Aorta (tissue), 5 donors: ENCODE measurements at regions of chr3 and their contacts with region 1.

Region 1: DNA sequence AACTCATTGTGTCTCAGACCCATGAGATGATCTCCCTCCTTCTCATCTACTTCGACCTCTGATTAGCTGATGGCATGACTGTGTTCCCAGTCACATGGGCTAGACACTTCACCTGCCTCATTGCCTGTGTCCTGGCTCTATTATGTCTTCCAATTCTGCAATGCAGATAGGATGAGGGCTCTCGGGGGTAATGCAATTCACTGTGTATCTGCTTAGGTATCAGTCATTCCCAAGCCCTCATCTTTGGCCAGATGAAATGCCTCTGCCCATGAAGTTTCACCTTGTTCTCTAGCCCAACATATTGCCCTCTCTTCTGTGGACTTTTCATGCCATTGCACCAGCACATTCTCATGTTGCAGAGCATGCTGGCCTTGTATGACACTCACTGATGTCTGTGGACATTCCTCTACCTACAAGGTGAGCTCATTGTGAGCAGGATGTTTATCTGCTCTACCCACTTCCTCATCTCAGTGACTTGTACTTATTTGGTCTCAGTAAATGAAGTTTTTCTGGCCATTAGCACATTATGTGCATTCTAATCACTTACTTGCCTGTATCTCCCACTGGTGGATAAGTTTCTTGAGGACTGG is 32.3 kb downstream of the MOBP start:
- DNase-seq: no peak
- ATAC-seq: no peak
- H3K4me3 ChIP-seq: no peak overlapping the region
- H3K27ac ChIP-seq: no peak overlapping the region
- H3K4me1 ChIP-seq: peaks cover 0 to 2% of the 10 kb centered on the region in 2 donors
- H3K27me3 ChIP-seq: no peaks in the 10 kb centered on the region

Region 2: GRCh38 chr3:39415983-39416382 is 83.8 kb before region 1 on chr3:
- intact Hi-C with region 1: loop called in 1 of 2 experiments (anchors 2 kb)
- DNase-seq: no peak
- ATAC-seq: no peak
- H3K4me3 ChIP-seq: no peak overlapping the region
- H3K27ac ChIP-seq: no peak overlapping the region
- H3K4me1 ChIP-seq: no peaks in the 10 kb centered on the region
- H3K27me3 ChIP-seq: no peaks in the 10 kb centered on the region

Region 3: GRCh38 chr3:39468108-39468436 is 31.7 kb before region 1 on chr3:
- intact Hi-C with region 1: no loop called
- DNase-seq: no peak
- ATAC-seq: no peak
- H3K4me3 ChIP-seq: no peak overlapping the region
- H3K27ac ChIP-seq: no peak overlapping the region
- H3K4me1 ChIP-seq: no peaks in the 10 kb centered on the region
- H3K27me3 ChIP-seq: no peaks in the 10 kb centered on the region